ENCODE measurements at regions of chr12 and their contacts with region 1.

Region 1: DNA sequence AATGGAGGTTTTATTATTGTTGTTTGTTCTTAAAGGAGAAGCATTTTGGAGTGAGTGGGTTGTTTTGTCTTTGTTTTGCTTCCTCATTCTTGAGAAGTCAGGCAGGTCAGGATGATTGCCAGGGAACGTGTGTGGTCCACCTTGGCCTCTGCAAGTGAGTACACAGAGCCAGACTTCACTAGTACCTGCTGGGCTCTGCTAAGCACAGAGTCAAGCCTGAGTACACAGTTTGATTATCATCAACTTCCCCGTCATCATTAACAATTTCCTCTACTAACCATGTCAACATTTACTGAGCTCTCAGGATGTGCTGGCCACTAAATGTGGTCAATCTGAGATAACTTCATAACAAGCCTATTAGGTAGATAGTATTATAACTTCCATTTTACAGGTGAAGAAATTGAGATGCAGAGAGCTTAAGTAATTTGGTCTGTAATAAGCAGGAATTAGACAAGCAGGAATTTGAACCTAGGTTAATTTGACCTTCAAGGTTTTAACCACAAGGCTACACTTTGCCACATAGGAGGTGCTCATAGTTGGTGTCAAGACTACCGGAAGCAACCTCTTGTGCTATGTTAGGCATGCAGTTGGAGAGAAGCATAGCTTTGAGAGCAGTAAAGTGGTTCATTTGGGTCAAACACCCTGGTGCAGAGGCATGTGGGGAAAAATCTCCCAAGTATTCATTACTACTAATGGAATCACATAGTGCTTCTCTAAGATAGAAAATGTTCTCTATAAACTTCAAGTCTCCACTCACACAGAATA is 178.3 kb downstream of the NUAK1 start:
- DNase-seq: no peak
- ATAC-seq: no peak
- H3K4me3 ChIP-seq: no peak overlapping the region
- H3K27ac ChIP-seq: no peak overlapping the region
- H3K4me1 ChIP-seq: peaks cover 4 to 6% of the 10 kb centered on the region in 2 donors
- H3K27me3 ChIP-seq: no peaks in the 10 kb centered on the region

Region 2: GRCh38 chr12:105409801-105410471 is 550.6 kb before region 1 on chr12:
- intact Hi-C with region 1: loop called in 1 of 2 experiments (anchors 10 kb)
- DNase-seq: peak in 1 of 2 donors; percentile 70
- ATAC-seq: peak; percentile 75
- H3K4me3 ChIP-seq: no peak overlapping the region
- H3K27ac ChIP-seq: peak overlapping the region in 1 of 2 donors; percentile 46
- H3K4me1 ChIP-seq: peaks cover 0 to 1% of the 10 kb centered on the region in 2 donors
- H3K27me3 ChIP-seq: no peaks in the 10 kb centered on the region

Region 3: GRCh38 chr12:105741744-105742566 is 218.5 kb before region 1 on chr12:
- intact Hi-C with region 1: loop called in 1 of 2 experiments (anchors 10 kb)
- DNase-seq: peak in 1 of 2 donors; percentile 55
- ATAC-seq: peak; percentile 64
- H3K4me3 ChIP-seq: no peak overlapping the region
- H3K27ac ChIP-seq: peak overlapping the region; percentile 69 to 80
- H3K4me1 ChIP-seq: peaks cover 13 to 16% of the 10 kb centered on the region in 2 donors
- H3K27me3 ChIP-seq: no peaks in the 10 kb centered on the region

Region 4: GRCh38 chr12:105843986-105844760 is 116.3 kb before region 1 on chr12:
- intact Hi-C with region 1: no loop called
- DNase-seq: no peak
- ATAC-seq: no peak
- H3K4me3 ChIP-seq: no peak overlapping the region
- H3K27ac ChIP-seq: no peak overlapping the region
- H3K4me1 ChIP-seq: no peaks in the 10 kb centered on the region
- H3K27me3 ChIP-seq: no peaks in the 10 kb centered on the region

Region 5: DNA sequence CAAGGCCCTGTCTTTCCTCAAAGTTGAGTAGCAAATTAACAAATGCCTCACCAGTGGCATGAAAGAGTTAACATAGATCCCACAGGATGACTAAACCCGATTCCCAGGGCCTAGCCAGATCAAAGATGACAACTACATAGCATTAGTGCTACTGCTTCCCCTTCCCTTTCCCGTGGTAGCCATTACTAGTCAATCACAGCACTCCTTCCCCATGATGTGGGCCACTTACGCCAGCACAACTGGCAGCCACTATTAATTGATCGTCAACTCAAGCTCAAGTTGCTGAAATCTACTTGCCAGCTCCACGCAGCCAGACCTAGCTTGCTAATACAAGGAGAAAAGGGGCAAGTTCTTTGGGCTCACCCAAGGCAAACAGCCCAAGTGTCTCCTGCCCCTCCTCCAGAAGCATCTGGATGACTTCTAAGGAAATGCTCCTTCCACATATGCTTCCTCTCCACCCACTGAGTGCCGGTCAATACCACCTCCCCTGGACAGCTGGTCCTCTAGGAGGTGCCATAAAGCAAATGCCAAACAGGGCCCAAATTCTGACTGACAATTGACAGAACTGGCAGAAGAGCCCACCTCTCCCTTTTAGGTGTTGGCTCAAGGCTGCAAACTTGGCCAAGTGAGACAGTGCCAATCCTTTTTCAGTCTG is 105.7 kb after region 1 on chr12:
- intact Hi-C with region 1: loop called in 1 of 2 experiments (anchors 5 kb)
- DNase-seq: no peak
- ATAC-seq: no peak
- H3K4me3 ChIP-seq: no peak overlapping the region
- H3K27ac ChIP-seq: no peak overlapping the region
- H3K4me1 ChIP-seq: peaks cover 0 to 4% of the 10 kb centered on the region in 2 donors
- H3K27me3 ChIP-seq: no peaks in the 10 kb centered on the region

Measured in aorta (tissue), 5 donors.